ENCODE measurements at regions of chr6 and their contacts with region 1.

Region 1: DNA sequence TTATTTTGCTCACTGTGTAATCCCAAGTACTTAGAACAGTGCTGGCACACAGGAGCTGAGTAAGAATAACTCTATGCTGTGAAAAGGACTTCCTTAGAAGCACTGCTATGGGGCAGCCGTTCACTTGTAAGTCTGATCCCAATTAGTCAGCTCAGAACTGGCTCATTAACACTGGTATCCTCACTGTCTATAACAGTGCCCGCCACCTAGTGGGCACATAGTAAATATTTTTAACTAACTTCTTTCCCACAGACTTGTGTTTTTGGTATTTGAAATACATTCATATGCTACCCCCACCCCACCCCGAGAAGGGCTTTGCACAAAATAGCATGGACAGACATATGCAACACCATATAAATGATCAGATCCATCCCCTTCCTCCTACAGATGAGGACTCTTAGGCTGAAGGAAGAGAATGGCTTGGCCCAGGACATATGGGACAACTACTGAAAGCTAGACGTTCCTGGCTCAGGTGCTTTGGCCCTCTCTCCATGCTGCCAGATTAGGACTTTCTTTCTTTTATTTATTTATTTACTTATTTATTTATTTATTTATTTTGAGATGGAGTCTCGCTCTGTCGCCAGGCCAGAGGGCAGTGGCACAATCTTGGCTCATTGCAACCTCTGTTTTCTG is 47.1 kb downstream of the DST start:
- DNase-seq: no peak
- H3K4me3 ChIP-seq: no peak overlapping the region
- CTCF ChIP-seq: no peak
- POLR2A ChIP-seq: no peak

Region 2: DNA sequence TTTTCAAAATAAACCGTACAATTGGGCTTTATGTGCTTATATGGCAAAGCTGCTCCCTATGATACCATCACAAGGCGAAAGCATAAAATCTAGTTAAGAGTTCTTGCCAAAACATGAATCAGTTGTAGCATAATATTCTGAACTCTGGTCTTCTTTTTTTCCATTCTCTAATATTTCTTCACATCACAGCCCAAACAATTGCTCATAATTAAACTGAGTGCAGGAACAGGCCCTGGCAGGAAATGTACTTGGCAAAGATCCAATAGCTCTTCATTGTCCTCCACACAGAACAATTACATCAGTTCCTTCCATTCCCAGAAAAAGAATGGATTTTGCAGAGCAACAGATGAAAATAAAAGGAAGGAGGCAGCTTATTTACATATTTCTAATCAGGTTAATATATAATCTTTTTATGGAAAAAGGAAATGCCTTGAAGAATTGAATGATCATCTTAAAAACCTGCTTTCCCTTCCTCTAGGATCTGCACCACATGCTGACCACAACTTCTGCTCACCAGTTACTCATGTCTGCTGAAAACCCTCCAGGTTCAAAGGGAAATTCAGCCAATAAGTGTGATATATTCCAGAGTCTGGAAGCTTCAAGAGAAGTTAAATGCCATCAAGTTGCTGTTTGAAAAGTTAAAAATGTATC is 224.9 kb before region 1 on chr6:
- intact Hi-C with region 1: loop called (anchors 10 kb)
- DNase-seq: peak in 1 of 2 donors; percentile 78
- H3K4me3 ChIP-seq: no peak overlapping the region
- CTCF ChIP-seq: no peak
- POLR2A ChIP-seq: no peak

Measured in lower leg skin (tissue), 4 donors.